ENCODE measurements at regions of chr9 and their contacts with region 1.

Region 1: DNA sequence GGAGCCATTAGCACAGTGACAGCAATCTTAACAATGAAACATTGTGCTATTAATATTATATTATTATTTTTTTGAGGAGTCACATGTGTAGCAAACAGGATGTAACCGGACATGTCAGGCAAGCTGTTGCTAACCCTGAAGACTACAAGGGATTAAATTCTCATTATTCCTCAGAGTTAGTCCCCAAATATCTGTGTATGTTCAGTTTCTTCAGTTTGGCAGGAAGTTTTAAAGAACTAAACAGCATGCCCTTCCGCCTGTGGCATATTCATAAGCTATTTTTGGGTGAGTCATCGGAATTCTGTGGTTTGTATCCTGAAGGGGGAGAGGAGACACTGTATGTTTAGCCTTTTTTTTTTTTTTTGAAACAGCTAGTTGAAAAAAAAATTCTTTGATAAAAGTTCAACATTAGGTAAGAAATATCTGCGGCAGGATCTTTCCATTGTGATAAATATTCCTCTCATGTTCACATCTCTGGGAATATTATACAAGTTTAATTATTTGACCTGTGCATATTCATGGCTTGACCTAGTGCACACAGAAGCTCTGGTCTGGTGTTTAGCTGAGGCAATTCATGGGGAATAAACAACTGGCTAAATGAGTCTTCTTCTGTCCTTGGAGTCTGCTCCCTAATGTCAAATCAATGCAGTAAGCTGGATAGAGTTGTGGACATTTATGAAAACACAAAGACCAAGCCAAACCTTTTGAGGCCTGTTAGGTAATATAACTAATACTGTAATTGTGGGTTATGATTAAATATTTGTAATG is 202.7 kb upstream of the CDKN2B start:
- DNase-seq: peak; percentile 79
- H3K4me3 Mint-ChIP-seq: no peak overlapping the region
- H3K27ac Mint-ChIP-seq: peak overlapping the region; percentile 79
- H3K4me1 Mint-ChIP-seq: peaks cover 23% of the 10 kb centered on the region
- H3K27me3 Mint-ChIP-seq: no peaks in the 10 kb centered on the region
- CTCF ChIP-seq: no peak

Region 2: DNA sequence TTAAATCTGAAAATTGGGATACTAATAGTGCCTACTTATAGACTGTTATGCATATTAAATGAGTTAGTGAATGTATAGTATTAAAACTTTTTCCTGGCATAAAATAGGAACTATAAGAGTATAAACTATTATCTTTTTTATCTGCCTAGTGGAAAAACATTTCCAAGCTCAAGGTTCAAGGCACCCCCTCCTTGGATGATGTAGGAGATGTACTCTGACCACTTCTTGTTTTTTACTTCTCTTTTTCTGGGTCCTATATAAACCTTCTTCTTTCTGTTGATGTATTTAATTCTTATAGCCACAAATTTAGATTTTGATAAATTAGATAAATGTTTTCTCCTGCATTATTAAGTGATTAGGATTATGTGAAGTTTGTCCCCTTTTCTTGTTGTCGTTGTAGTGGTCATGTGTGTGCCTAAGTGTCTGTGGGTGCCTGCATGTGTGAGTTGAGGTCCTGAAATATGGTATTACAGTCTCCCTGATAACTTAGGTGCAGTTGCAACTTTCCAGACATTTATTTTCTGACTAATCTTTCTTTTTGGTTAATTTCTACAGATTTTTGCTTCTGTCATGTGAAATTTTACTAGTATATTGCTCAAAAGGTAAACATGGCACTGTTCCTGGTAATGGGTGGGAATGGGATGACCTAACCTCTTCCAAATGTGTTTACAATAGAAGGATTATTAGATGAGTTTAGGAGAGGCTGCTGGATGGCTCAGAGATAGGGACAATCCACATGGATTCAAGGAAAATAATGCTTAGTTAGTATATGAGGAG is 41.9 kb before region 1 on chr9:
- CTCF ChIA-PET with region 1: interaction called, 5 read pairs
- POLR2A ChIA-PET with region 1: interaction called, 5 read pairs
- intact Hi-C with region 1: loop called (anchors 5 kb)
- DNase-seq: peak; percentile 59
- H3K4me3 Mint-ChIP-seq: peak overlapping the region; percentile 40
- H3K27ac Mint-ChIP-seq: peak overlapping the region; percentile 92
- H3K4me1 Mint-ChIP-seq: peaks cover 25% of the 10 kb centered on the region
- H3K27me3 Mint-ChIP-seq: no peaks in the 10 kb centered on the region
- CTCF ChIP-seq: no peak